Thyroid gland (tissue), 4 donors: ENCODE measurements at regions of chr10 and their contacts with region 1.

Region 1: GRCh38 chr10:69123747-69124562 is at the start of gene VPS26A:
- DNase-seq: peak; percentile 99
- H3K4me3 ChIP-seq: peak within 1 kb of the TSS; percentile 47 to 74 (median 72)
- H3K27ac ChIP-seq: peak within 1 kb of the TSS; percentile 95 to 96 (median 96)
- H3K4me1 ChIP-seq: peaks cover 7 to 8% of the 10 kb centered on the region in 2 donors
- H3K27me3 ChIP-seq: no peaks in the 10 kb centered on the region
- CTCF ChIP-seq: peak in 2 of 6 experiments; percentile 27 to 31
- POLR2A ChIP-seq: peak in 1 of 2 donors; percentile 94
- total RNA-seq, gene VPS26A: 32.5 to 41.0 (median 36.7) TPM

Region 2: GRCh38 chr10:68992636-68993440 is 131.1 kb before region 1 on chr10:
- intact Hi-C with region 1: loop called (anchors 10 kb)
- DNase-seq: peak; percentile 78 to 80
- H3K4me3 ChIP-seq: no peak overlapping the region
- H3K27ac ChIP-seq: peak overlapping the region; percentile 33 to 69 (median 42)
- H3K4me1 ChIP-seq: peaks cover 31 to 49% of the 10 kb centered on the region in 2 donors
- H3K27me3 ChIP-seq: no peaks in the 10 kb centered on the region
- CTCF ChIP-seq: no peak
- POLR2A ChIP-seq: no peak

Region 3: DNA sequence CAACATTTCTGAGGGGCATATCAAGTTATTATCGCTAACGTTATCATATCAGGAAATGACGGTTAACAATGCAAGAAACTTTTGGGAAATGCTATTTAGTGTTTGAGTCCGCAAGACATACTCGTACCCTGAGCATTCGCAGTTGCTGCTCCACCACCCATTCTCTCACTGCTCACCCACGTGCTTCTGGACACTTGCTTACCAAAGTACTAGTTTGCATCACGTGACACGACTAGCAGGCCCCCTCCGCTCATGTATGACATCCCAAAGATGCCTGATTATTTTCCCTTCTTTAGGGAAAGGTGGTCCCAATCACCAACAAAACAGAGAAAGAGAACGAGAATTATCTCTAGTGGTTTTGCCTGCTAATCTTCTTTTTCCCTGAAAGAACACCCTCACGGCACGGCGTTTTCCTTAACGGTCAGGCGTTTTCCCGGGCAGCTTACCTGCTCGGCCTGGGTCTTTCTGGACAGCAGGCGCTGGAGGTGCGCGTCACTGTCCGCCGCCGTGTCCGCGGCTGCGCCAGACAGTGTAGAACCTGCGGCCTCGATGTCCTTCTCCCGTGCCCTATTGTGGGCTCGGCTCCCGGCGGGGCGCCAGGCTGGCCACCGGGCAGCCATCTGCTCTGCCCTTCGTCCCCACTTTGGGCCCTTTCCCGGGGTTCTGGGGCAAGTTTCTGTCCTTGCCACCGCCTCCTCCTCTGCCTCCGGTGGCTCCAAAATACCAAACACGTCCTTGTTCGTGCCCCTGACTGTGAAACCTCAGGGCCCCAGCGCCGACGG is 56.0 kb after region 1 on chr10 and contains the start of gene SUPV3L1:
- intact Hi-C with region 1: loop called (anchors 10 kb)
- DNase-seq: peak; percentile 94
- H3K4me3 ChIP-seq: peak within 1 kb of the TSS; percentile 78 to 97 (median 92)
- H3K27ac ChIP-seq: peak within 1 kb of the TSS; percentile 89 to 99 (median 91)
- H3K4me1 ChIP-seq: peaks cover 12 to 17% of the 10 kb centered on the region in 2 donors
- H3K27me3 ChIP-seq: no peaks in the 10 kb centered on the region
- CTCF ChIP-seq: peak in 1 of 6 experiments; percentile 33
- POLR2A ChIP-seq: peak in 1 of 2 donors; percentile 50
- total RNA-seq, gene SUPV3L1: 25.1 to 31.6 (median 27.8) TPM